Gastrocnemius medialis (tissue), 4 donors: ENCODE measurements at regions of chr12 and their contacts with region 1.

Region 1: GRCh38 chr12:26651566-26652188 is 181.3 kb downstream of the ITPR2 start:
- DNase-seq: no peak
- ATAC-seq: peak in 1 of 2 donors; percentile 70
- H3K4me3 ChIP-seq: no peak overlapping the region
- H3K27ac ChIP-seq: no peak overlapping the region
- H3K4me1 ChIP-seq: no peaks in the 10 kb centered on the region
- H3K27me3 ChIP-seq: no peaks in the 10 kb centered on the region
- CTCF ChIP-seq: peak; percentile 50 to 77 (median 73)
- POLR2A ChIP-seq: no peak

Region 2: GRCh38 chr12:25436203-25437030 is 1215.3 kb before region 1 on chr12:
- in situ Hi-C with region 1: loop called in 1 of 4 experiments (anchors 25 kb)
- intact Hi-C with region 1: no loop called
- DNase-seq: no peak
- ATAC-seq: peak; percentile 47 to 87
- H3K4me3 ChIP-seq: peak overlapping the region; percentile 37 to 51 (median 48)
- H3K27ac ChIP-seq: no peak overlapping the region
- H3K4me1 ChIP-seq: no peaks in the 10 kb centered on the region
- H3K27me3 ChIP-seq: no peaks in the 10 kb centered on the region
- CTCF ChIP-seq: peak; percentile 45 to 77 (median 64)
- POLR2A ChIP-seq: no peak

Region 3: GRCh38 chr12:26434299-26435068 is 217.2 kb before region 1 on chr12:
- in situ Hi-C with region 1: loop called in 1 of 4 experiments (anchors 25 kb)
- intact Hi-C with region 1: loop called (anchors 2 kb)
- DNase-seq: no peak
- ATAC-seq: peak; percentile 33 to 84
- H3K4me3 ChIP-seq: no peak overlapping the region
- H3K27ac ChIP-seq: no peak overlapping the region
- H3K4me1 ChIP-seq: no peaks in the 10 kb centered on the region
- H3K27me3 ChIP-seq: no peaks in the 10 kb centered on the region
- CTCF ChIP-seq: peak; percentile 49 to 68 (median 64)
- POLR2A ChIP-seq: no peak

Region 4: GRCh38 chr12:26576266-26576665 is 75.4 kb before region 1 on chr12:
- in situ Hi-C with region 1: no loop called
- intact Hi-C with region 1: no loop called
- DNase-seq: no peak
- ATAC-seq: no peak
- H3K4me3 ChIP-seq: no peak overlapping the region
- H3K27ac ChIP-seq: no peak overlapping the region
- H3K4me1 ChIP-seq: no peaks in the 10 kb centered on the region
- H3K27me3 ChIP-seq: no peaks in the 10 kb centered on the region
- CTCF ChIP-seq: no peak
- POLR2A ChIP-seq: no peak